Panc1 (cell line): ENCODE measurements at regions of chr3 and their contacts with region 1.

Region 1: DNA sequence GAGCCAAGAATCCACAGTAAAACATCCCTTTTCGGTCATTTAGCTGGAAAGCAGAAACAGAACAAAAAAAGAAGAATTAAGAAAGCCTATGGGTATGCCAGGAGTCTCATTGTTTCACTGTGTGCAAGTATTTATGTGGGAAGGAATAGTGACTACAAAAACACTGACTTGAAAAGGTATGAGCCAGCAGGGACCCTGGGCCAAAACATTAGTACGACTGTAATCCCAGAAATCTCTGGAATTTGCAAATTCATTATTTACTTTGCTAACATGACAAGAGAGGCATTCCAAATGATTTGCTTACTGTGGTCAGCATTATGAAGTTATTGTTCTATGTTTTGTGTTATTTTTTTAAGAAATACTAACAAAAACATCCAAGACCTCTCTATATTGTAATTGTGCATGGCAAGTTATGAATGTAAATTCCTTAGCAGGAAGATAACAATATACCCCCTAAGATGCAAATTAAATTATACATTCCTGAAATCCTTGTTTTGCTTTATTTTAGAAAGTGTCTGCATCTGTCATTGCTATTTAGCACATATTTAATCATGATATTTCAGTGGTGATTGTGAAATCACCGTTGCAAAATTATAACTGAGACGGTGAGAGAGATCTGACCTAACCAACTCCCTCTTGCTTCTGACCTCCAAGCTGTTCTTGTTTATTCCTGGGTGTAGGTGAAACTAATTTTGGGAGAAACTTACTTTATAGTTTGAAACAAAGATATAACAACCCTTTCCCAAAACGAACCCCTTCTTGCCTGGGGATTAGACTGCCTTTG is 299.2 kb downstream of the ZPLD1 start:
- DNase-seq: no peak
- ATAC-seq: no peak
- H3K4me3 ChIP-seq: no peak overlapping the region
- H3K27ac ChIP-seq: no peak overlapping the region
- H3K4me1 ChIP-seq: no peaks in the 10 kb centered on the region
- H3K27me3 ChIP-seq: no peaks in the 10 kb centered on the region
- CTCF ChIP-seq: no peak

Region 2: DNA sequence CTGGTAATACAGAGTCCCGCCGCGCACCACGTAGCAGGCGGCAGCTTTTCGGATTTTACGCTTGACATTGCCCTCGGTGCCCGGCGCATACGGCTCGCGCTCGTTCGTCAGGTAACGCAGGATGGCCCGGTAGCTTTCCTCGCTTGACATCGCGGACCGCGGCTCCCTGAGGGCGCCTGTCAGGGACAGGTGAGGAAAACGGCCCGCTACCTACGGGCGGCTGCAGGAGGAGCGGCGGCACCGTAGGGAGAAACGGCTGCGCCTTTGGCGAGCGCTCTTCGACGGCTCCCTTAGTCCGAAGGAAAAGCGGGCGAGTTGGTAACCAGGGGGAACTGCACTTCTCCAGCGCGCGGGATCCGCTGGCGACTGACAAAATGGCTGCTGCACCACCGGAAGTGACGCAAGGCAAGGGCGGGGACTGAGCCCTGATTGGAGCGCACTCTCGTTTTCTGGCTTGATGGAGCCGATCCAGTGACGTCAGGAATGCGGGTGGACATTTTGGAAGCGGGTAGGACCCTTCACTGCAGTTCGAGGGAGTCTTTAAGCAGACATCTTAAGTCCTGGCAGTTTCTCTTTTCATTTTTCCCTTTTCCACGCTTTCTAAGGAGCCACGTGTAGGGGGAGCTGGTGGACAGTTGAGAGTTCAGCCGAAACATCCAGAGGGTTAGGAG is 1057.1 kb before region 1 on chr3 and contains the start of gene ZBTB11:
- CTCF ChIA-PET with region 1: no interaction called
- POLR2A ChIA-PET with region 1: interaction called, 16 read pairs
- in situ Hi-C with region 1: no loop called
- intact Hi-C with region 1: no loop called
- DNase-seq: peak; percentile 99
- ATAC-seq: peak; percentile 88
- H3K4me3 ChIP-seq: peak within 1 kb of the TSS; percentile 88 to 89
- H3K27ac ChIP-seq: peak within 1 kb of the TSS; percentile 88
- H3K4me1 ChIP-seq: peaks cover 20% of the 10 kb centered on the region
- H3K27me3 ChIP-seq: no peaks in the 10 kb centered on the region
- CTCF ChIP-seq: peak; percentile 81
- total RNA-seq, gene ZBTB11: 20.1 TPM

Region 3: DNA sequence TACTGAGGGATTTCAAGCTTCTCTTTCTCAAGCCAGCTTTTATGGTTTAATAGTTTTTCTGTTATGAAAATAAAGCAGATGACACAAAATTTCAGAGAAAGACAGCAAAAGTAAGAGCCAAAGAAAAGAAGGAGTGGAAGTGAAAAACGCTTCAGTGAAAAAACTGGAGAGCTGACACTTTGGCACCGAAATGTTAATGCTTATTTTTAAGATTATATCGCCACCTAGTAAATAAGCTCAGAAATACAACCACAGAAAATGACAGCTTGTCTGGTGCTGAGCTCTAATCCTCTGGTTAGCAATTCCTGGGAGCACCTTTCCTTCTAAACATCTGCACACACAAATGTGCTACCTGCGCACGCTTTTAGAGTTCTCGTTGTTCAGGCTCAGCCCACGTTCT is 197.5 kb before region 1 on chr3:
- CTCF ChIA-PET with region 1: no interaction called
- POLR2A ChIA-PET with region 1: no interaction called
- in situ Hi-C with region 1: no loop called
- intact Hi-C with region 1: no loop called
- DNase-seq: peak; percentile 25
- ATAC-seq: peak; percentile 84
- H3K4me3 ChIP-seq: no peak overlapping the region
- H3K27ac ChIP-seq: no peak overlapping the region
- H3K4me1 ChIP-seq: no peaks in the 10 kb centered on the region
- H3K27me3 ChIP-seq: no peaks in the 10 kb centered on the region
- CTCF ChIP-seq: peak; percentile 69

Region 4: DNA sequence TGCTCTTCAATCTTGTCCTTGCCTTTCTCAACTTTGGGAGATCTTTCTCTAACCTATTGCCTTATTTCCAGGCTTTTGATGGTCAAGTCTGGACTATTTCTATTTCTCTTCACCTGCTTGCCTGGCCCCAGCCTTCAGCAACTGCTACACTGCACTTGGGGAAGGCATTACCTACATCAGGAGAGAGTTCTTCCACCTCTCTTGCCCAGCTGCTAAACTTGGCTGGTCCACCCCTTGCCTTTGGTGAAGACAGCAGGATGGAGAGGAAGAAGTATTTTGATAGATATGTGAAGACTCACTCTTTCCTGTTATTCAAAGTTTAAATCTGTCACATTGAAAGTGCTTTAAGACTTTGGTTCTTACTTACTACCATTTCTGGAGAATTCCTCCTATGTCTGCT is 275.6 kb after region 1 on chr3:
- CTCF ChIA-PET with region 1: no interaction called
- POLR2A ChIA-PET with region 1: no interaction called
- in situ Hi-C with region 1: no loop called
- intact Hi-C with region 1: no loop called
- DNase-seq: no peak
- ATAC-seq: no peak
- H3K4me3 ChIP-seq: no peak overlapping the region
- H3K27ac ChIP-seq: no peak overlapping the region
- H3K4me1 ChIP-seq: no peaks in the 10 kb centered on the region
- H3K27me3 ChIP-seq: no peaks in the 10 kb centered on the region
- CTCF ChIP-seq: no peak